Posterior vena cava (tissue), 2 donors: ENCODE measurements at regions of chr20 and their contacts with region 1.

Region 1: DNA sequence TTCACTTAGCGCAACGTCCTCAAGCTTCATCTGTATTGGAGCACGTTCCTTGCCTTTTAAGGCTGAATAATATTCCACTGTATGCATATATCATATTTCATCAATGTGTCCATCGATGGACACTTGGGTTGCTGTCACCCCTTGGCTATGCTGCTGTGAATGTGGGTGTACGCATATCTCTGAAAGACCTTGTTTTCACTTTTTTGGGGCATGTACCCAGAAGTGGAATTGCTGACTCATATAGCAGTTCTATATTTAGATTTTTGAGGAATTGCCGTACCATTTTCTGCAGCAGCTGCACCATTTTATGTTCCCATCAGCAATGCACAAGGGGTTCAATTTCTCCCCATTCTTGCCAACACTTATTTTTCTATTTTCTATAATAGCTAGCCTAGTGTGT is 22.8 kb upstream of the SLC23A2 start:
- DNase-seq: no peak

Region 2: GRCh38 chr20:3502878-3503277 is 1521.2 kb before region 1 on chr20:
- intact Hi-C with region 1: loop called in 1 of 2 experiments (anchors 5 kb)
- DNase-seq: no peak

Region 3: DNA sequence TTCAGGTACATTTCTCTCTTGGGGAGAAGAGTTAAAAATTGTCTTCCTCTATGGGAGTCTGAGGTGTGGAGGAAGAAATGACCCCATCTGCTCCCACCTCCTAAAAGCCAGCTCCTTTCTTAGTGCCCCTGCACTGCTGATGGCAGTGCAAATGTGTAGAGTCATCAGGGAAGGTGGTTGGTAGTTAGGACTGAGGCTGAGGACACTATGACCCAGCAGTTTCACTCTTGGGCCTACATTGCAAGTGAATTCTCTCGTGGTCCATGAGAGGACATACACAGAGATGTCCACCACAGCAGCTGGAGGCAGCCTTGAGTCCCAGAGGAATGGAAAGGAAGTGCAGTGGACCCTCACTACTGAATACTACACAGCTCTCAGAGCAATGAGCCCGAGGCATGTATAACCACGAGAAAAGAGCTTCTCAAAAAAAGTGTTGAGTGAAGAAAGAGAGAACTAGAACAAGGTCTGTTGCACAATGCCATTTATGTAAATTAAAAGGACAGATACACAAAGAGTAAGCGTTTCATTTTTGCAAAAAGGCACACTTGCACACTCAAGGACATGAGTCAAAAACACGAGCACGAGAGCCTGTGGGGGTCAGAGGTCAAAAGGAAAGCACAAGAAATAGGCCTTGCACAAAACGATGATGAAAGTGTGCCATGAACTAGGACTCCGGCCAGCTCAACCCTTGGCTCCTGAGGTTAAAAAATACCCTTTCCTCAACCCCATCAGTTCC is 610.6 kb before region 1 on chr20:
- intact Hi-C with region 1: no loop called
- DNase-seq: no peak